PC-9 (cell line): ENCODE measurements at regions of chr1 and their contacts with region 1.

Region 1: GRCh38 chr1:52653207-52653849 is 20.4 kb downstream of the SHISAL2A start:
- DNase-seq: no peak
- H3K4me3 ChIP-seq: no peak overlapping the region
- H3K27ac ChIP-seq: no peak overlapping the region
- H3K4me1 ChIP-seq: peaks cover 2% of the 10 kb centered on the region
- H3K27me3 ChIP-seq: no peaks in the 10 kb centered on the region
- CTCF ChIP-seq: no peak

Region 2: DNA sequence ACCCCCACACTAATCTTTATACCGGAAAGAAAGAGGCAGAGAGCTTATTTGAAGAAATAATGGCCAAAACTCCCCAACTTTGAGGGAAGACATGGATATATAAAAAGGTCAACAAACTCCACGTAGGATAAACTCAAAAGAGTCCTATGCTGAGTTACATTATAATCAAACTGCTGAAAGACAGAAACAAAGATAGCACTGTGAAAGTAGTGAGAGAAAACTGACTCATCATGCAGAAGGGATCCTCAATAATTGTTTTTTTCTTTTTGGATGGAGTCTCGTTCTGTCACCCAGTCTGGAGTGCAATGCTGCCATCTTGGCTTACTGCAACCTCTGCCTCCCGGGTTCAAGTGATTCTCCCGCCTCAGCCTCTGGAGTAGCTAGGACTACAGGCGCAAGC is 1274.5 kb before region 1 on chr1:
- CTCF ChIA-PET with region 1: no interaction called
- POLR2A ChIA-PET with region 1: interaction called, 12 read pairs
- intact Hi-C with region 1: no loop called
- DNase-seq: no peak
- H3K4me3 ChIP-seq: no peak overlapping the region
- H3K27ac ChIP-seq: no peak overlapping the region
- H3K4me1 ChIP-seq: no peaks in the 10 kb centered on the region
- H3K27me3 ChIP-seq: no peaks in the 10 kb centered on the region
- CTCF ChIP-seq: no peak

Region 3: DNA sequence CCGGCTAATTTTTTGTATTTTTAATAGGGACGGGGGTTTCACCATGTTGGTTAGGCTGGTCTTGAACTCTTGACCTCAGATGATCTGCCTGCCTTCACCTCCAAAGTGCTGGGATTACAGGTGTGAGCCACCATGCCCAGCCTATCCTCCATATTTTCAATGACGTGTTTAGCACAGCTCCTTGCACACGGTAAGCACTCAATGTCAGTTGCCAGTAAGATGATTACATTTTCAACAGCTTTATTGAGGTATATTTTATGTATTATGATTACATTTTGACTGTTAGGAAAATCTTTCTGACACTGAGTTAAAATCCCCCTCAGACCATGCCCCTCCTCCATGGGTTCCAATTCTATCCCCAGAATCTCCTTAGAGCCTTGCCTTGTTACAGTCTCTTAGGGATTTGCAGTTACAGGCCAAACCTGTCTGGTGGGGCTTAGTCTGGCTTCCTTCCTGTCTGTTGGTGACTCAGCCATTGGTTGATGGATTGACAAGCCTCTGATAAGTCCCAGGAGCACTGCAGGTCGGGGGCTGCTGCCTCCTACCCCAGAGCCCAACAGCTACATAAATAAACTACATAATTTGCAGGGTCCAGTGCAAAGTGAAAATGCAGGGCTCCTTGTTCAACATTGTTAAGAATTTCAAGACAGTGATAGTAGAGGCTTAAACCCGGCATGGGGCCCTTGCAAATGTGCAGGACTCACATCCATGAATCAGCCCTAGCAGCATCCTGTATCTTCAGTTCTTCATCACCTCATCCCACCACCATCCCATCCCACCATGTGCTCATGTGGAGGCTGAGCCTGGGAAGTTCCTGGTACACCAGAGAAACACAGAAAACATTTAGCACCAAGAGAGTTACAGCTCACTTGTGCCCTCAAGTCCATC is 21.4 kb after region 1 on chr1:
- CTCF ChIA-PET with region 1: no interaction called
- POLR2A ChIA-PET with region 1: no interaction called
- intact Hi-C with region 1: no loop called
- DNase-seq: peak; percentile 54 to 84
- H3K4me3 ChIP-seq: no peak overlapping the region
- H3K27ac ChIP-seq: no peak overlapping the region
- H3K4me1 ChIP-seq: peaks cover 15% of the 10 kb centered on the region
- H3K27me3 ChIP-seq: no peaks in the 10 kb centered on the region
- CTCF ChIP-seq: no peak